Panc1 (cell line): ENCODE measurements at regions of chr4 and their contacts with region 1.

Region 1: GRCh38 chr4:98166025-98166730 is 22.9 kb upstream of the STPG2 start:
- DNase-seq: no peak
- ATAC-seq: peak; percentile 88
- H3K4me3 ChIP-seq: no peak overlapping the region
- H3K27ac ChIP-seq: no peak overlapping the region
- H3K4me1 ChIP-seq: no peaks in the 10 kb centered on the region
- H3K27me3 ChIP-seq: no peaks in the 10 kb centered on the region
- CTCF ChIP-seq: no peak

Region 2: GRCh38 chr4:98739751-98740150 is 573.6 kb after region 1 on chr4:
- CTCF ChIA-PET with region 1: no interaction called
- POLR2A ChIA-PET with region 1: no interaction called
- in situ Hi-C with region 1: no loop called
- intact Hi-C with region 1: loop called (anchors 10 kb)
- DNase-seq: no peak
- ATAC-seq: no peak
- H3K4me3 ChIP-seq: no peak overlapping the region
- H3K27ac ChIP-seq: no peak overlapping the region
- H3K4me1 ChIP-seq: no peaks in the 10 kb centered on the region
- H3K27me3 ChIP-seq: no peaks in the 10 kb centered on the region
- CTCF ChIP-seq: no peak

Region 3: GRCh38 chr4:98802770-98803198 is 636.6 kb after region 1 on chr4:
- CTCF ChIA-PET with region 1: no interaction called
- POLR2A ChIA-PET with region 1: no interaction called
- in situ Hi-C with region 1: no loop called
- intact Hi-C with region 1: no loop called
- DNase-seq: no peak
- ATAC-seq: no peak
- H3K4me3 ChIP-seq: no peak overlapping the region
- H3K27ac ChIP-seq: no peak overlapping the region
- H3K4me1 ChIP-seq: no peaks in the 10 kb centered on the region
- H3K27me3 ChIP-seq: no peaks in the 10 kb centered on the region
- CTCF ChIP-seq: no peak

Region 4: DNA sequence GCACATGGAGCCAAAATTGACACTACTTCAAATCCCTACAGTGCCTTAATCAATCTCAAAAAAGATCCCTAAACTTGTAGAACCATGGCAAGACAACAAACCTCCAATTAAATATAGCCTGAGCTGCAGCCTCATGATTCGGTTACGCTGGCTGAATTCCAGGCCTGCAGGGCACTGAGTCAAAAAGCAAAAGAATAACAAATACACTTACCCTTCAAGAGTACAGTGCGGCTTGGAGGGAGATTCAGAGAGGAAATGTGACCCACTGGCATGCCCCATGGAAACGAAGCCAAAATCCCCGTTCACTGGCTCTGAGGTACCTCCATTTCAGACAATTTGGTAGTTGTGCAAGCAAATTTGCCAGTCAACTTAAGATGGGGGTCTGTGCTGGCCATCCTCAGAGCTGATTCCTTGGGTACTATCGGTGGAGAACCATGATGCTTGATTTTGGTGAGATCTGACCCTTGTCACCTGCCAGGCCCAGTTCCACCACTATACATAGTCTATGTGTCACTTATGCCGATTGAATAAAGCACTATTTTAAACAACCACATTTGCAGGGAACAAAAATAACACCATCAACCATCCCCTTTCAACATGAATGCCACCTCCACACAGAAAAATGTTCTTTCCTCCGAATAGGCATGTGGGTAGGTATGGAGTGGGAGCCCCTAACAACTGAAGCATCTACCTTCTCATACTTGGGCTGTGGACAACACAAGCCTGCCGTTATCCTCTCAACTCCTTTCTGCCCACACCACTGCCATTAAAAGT is 1489.3 kb after region 1 on chr4:
- CTCF ChIA-PET with region 1: interaction called, 12 read pairs
- POLR2A ChIA-PET with region 1: no interaction called
- in situ Hi-C with region 1: no loop called
- intact Hi-C with region 1: no loop called
- DNase-seq: no peak
- ATAC-seq: no peak
- H3K4me3 ChIP-seq: no peak overlapping the region
- H3K27ac ChIP-seq: no peak overlapping the region
- H3K4me1 ChIP-seq: no peaks in the 10 kb centered on the region
- H3K27me3 ChIP-seq: no peaks in the 10 kb centered on the region
- CTCF ChIP-seq: no peak